GM10248 (cell line): ENCODE measurements at regions of chr14 and their contacts with region 1.

Region 1: GRCh38 chr14:103356024-103356682 is 22.1 kb downstream of the EIF5 start:
- DNase-seq: no peak
- CTCF ChIP-seq: no peak

Region 2: GRCh38 chr14:103057365-103058096 is 298.6 kb before region 1 on chr14 and contains the start of gene CDC42BPB:
- CTCF ChIA-PET with region 1: no interaction called
- POLR2A ChIA-PET with region 1: no interaction called
- DNase-seq: peak; percentile 84
- CTCF ChIP-seq: no peak

Region 3: DNA sequence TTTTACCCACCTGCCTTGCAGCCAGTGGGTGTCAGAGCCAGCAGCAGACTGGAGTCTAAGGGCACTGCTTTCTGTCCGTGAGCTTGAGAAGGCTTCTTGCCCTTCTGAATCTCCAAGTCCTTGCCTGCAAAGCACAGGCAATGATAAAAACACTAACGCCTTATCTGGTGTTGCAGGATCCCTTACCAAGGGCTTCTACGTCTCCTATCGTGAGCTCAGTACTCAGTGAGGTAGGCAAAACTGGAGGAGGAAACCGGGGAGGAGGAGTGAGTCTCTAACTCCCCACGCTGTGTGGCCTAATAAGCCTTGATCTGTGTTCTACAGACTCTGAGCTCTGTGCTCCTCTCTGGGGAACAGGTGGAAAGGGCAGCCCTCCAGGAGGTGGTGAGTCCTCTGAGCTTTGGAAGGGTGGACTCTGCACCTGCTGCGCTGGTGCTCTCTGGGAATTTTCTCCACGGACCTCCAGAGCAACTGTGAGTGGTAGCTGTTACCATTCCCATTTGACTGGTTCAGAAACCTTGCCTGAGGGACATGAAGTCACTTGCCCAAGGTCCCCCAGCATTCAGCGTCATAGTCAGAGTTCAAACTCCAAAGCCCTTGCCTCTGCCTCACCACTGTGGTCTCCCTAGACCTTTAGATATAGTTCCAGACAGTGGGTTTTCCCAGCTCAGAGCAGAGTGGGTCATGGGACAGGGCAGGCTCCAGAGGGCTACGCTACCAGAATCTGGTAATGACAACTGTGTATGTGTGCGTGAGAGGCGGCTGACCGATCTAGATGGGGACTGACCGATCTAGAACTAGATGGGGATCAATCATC is 22.1 kb after region 1 on chr14:
- CTCF ChIA-PET with region 1: interaction called, 13 read pairs
- POLR2A ChIA-PET with region 1: no interaction called
- DNase-seq: no peak
- CTCF ChIP-seq: no peak